ENCODE measurements at regions of chr10 and their contacts with region 1.

Region 1: DNA sequence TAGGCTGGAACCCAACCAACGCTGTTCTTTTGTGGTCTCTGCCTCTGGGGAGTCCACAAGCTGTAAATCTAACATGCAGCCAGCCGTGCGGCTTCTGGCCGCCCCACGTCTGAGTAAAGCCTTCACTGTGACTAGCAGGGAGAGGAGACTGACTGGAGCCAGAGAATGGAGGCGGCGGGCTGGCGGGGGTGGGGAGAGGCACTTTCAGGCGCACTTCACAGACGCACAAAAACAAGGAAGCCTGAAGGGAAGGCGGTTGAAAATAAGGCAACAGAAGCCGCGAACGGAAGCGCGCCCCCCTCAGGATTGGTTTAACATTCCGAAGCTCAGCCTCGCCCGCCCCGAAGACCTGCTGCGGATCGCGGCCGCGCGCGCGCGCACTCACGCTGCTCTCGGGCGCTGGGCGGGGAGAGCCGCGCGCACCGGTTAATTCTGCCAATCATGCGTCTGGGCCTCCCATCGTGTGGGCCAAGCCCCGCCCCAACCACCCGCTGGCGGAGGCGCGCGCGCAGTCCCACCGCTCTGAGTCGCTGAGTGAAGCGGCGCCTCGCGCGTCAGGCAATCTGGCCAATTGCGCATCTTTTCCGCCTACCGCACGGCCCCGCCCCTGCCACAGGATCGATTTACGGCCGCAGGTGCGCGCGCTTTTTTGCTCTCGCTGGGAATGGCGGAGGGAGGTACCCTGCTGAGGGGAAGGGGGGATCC is at the start of gene SFR1:
- DNase-seq: peak; percentile 99
- H3K4me3 Mint-ChIP-seq: peak within 1 kb of the TSS; percentile 94
- H3K27ac Mint-ChIP-seq: peak within 1 kb of the TSS; percentile 99
- H3K4me1 Mint-ChIP-seq: peaks cover 44% of the 10 kb centered on the region
- H3K27me3 Mint-ChIP-seq: peaks cover 10% of the 10 kb centered on the region
- total RNA-seq, gene SFR1: 13.8 and 14.0 TPM in 2 replicates

Region 2: GRCh38 chr10:103367782-103368518 is 753.7 kb before region 1 on chr10 and contains the start of gene TAF5:
- intact Hi-C with region 1: loop called (anchors 10 kb)
- DNase-seq: peak; percentile 89
- H3K4me3 Mint-ChIP-seq: peak within 1 kb of the TSS; percentile 89
- H3K27ac Mint-ChIP-seq: peak within 1 kb of the TSS; percentile 91
- H3K4me1 Mint-ChIP-seq: peaks cover 5% of the 10 kb centered on the region
- H3K27me3 Mint-ChIP-seq: no peaks in the 10 kb centered on the region
- total RNA-seq, gene TAF5: 10.4 and 11.0 TPM in 2 replicates

Region 3: DNA sequence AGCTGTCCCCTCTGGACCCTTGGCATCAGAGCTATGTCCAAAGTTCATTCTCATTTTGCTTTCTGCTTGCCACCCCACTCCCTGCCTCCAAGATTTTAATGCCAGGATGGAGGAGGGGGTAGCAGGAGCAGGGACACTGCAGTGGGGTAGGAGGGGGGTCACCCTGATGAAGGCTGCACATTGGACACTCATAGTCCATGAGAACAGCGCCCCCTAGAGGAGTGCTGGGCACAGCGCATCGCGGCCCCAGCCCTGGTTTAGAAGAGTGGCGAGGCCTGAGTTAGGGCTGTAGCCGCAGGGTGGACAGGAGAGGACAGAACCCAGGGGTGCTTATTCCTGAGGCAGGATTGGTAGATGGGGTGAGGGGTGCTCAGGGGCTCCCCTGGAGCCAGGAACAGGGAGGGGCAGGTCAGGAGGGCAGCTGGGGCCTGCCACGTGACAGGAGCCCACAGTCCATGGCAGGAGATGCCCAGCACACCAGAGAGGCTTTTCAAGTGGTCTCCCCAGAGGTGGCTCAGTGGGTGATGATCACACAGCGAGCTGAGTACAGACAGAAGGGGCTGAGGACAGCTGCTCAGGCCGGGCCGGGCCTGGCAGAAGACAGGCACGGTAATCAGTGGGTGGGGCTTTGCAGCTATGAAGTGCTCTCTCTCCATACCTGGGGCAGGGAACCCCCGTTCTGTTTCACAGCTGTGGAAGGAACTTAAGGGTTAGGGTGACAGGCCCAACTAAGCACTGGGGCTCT is 556.7 kb before region 1 on chr10:
- intact Hi-C with region 1: no loop called
- DNase-seq: peak; percentile 25
- H3K4me3 Mint-ChIP-seq: no peak overlapping the region
- H3K27ac Mint-ChIP-seq: no peak overlapping the region
- H3K4me1 Mint-ChIP-seq: no peaks in the 10 kb centered on the region
- H3K27me3 Mint-ChIP-seq: peaks cover 15% of the 10 kb centered on the region

Region 4: GRCh38 chr10:103800789-103801540 is 320.7 kb before region 1 on chr10:
- intact Hi-C with region 1: loop called (anchors 5 kb)
- DNase-seq: peak; percentile 64
- H3K4me3 Mint-ChIP-seq: peak overlapping the region; percentile 65
- H3K27ac Mint-ChIP-seq: peak overlapping the region; percentile 80
- H3K4me1 Mint-ChIP-seq: peaks cover 31% of the 10 kb centered on the region
- H3K27me3 Mint-ChIP-seq: peaks cover 3% of the 10 kb centered on the region

Region 5: DNA sequence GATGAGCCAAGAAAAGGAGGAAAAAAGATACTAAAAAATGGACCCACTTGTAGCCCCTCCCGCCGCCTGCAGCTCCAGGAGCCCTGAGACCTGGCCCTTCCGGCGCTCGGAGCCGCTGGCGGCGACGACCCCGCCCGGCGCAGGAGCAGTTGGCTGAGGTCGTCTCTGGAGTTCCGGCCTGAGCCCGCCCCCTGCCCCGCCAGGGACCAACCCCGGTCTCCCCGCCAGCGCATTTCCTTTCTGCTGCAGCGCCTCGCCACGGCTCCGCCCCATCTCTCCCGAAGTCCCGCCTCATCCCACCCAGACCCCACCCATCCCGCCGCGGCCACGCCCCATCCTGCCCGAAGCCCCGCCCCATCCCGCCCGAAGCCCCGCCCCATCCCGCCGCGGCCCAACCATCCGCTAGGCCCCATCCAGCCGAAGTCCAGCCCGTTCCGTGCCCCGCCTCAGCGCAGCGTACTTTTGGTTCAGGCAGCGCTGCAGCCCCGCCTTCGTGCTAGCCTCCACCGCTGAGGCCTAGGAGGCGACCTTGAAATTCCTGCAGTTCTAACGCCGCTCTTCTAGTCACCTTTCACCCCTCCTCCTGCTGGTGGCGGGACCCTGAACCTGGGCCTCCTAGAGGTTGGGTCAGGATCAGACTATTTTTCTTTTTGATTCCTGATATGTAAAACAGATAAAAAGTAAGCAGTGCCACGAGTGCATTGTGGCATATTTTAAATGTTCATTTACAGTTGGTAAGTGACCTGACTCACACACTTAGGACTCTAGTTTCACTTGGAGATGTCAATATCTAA is 203.4 kb before region 1 on chr10 and contains the start of gene STN1:
- intact Hi-C with region 1: loop called (anchors 1 kb)
- DNase-seq: peak; percentile 94
- H3K4me3 Mint-ChIP-seq: peak within 1 kb of the TSS; percentile 93
- H3K27ac Mint-ChIP-seq: peak within 1 kb of the TSS; percentile 94
- H3K4me1 Mint-ChIP-seq: peaks cover 36% of the 10 kb centered on the region
- H3K27me3 Mint-ChIP-seq: no peaks in the 10 kb centered on the region
- total RNA-seq, gene STN1: 19.4 and 20.0 TPM in 2 replicates

Region 6: DNA sequence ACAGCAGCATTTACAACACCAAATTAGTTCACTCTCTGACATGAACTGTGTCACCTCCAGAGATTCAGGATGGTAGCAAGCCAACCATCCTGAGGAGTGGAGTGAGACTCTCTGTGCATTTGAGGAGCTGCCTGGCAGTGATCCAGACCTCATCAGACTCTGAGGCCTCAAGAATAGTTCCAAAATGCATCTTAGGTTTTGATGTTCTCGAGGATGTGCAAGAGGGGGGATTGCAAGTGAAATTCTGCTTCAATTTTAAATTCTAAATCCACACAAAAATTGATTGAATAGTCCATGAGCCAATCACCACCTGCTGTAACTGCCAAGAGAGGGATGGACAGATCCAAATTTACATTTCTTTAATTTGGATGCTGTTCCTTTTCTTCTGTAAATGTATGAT is 105.0 kb before region 1 on chr10:
- intact Hi-C with region 1: loop called (anchors 5 kb)
- DNase-seq: no peak
- H3K4me3 Mint-ChIP-seq: no peak overlapping the region
- H3K27ac Mint-ChIP-seq: no peak overlapping the region
- H3K4me1 Mint-ChIP-seq: no peaks in the 10 kb centered on the region
- H3K27me3 Mint-ChIP-seq: no peaks in the 10 kb centered on the region

Region 7: DNA sequence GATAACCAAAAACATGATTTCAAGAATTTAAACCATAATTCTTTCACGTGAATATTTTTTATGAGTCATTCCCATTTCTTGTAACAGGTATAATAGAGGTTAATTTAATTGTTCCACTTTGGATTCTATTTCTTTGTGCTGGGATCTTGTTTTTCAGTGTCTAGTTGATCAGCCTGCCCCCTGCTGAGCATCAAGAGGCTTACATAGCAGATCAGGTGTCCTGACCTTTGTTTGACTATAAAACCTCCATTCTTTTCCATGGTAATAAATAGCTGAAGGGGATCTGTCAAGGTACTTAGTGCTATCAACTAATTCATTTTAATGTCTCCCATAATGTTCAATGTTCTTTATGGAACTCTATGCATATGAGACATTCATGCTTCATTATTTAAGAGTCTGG is 40.9 kb before region 1 on chr10:
- intact Hi-C with region 1: no loop called
- DNase-seq: no peak
- H3K4me3 Mint-ChIP-seq: no peak overlapping the region
- H3K27ac Mint-ChIP-seq: no peak overlapping the region
- H3K4me1 Mint-ChIP-seq: no peaks in the 10 kb centered on the region
- H3K27me3 Mint-ChIP-seq: peaks cover 8% of the 10 kb centered on the region

Region 8: DNA sequence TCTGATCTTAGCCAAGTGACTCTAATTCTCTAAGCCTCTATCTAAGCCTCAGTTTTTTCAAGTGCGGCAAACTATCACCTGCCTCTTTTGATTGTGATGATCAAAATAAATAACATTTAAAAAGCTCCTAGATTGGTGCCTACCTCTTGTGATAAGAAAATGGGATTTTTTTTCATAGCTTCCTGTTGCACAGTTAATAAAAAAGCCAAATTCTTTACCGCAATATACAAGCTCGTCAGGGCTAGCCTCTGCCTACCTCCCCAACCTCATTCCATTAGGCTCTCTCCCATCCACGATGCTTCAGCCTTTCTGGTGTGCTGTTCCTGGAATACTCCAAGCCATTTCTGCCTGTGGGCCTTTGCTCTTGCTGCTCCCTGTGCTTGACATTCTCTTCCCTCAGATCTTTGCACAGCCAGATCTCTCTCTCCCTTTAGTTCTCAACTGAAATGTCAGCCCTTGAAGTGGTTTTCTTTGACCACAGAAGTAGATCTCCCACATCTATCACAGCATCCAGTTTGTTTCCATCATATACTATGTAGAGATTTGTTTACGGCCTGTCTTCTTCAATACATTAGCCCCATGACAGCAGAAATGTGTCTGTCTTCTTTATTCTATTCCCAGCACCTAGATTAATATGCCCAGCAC is 49.1 kb after region 1 on chr10:
- intact Hi-C with region 1: no loop called
- DNase-seq: no peak
- H3K4me3 Mint-ChIP-seq: no peak overlapping the region
- H3K27ac Mint-ChIP-seq: no peak overlapping the region
- H3K4me1 Mint-ChIP-seq: peaks cover 6% of the 10 kb centered on the region
- H3K27me3 Mint-ChIP-seq: peaks cover 29% of the 10 kb centered on the region

Region 9: GRCh38 chr10:104328896-104329710 is 207.4 kb after region 1 on chr10:
- intact Hi-C with region 1: loop called (anchors 1 kb)
- DNase-seq: peak; percentile 56
- H3K4me3 Mint-ChIP-seq: peak overlapping the region; percentile 68
- H3K27ac Mint-ChIP-seq: peak overlapping the region; percentile 93
- H3K4me1 Mint-ChIP-seq: peaks cover 100% of the 10 kb centered on the region
- H3K27me3 Mint-ChIP-seq: no peaks in the 10 kb centered on the region